Naive thymus-derived CD4-positive, alpha-beta T cell (primary cell): ENCODE measurements at regions of chr12 and their contacts with region 1.

Region 1: GRCh38 chr12:575948-576612 is 87.2 kb downstream of the NINJ2 start:
- DNase-seq: peak; percentile 63 to 97 (median 83)
- ATAC-seq: peak; percentile 99
- H3K4me3 ChIP-seq: no peak overlapping the region
- H3K4me3 Mint-ChIP-seq: peak overlapping the region; percentile 14 to 70 (median 56)
- H3K27ac ChIP-seq: no peak overlapping the region
- H3K27ac Mint-ChIP-seq: peak overlapping the region in 7 of 9 donors; percentile 44 to 89 (median 76)
- H3K4me1 ChIP-seq: peaks cover 11 to 16% of the 10 kb centered on the region in 2 donors
- H3K4me1 Mint-ChIP-seq: peaks cover 10 to 38% (median 19%) of the 10 kb centered on the region in 7 donors
- H3K27me3 ChIP-seq: no peaks in the 10 kb centered on the region
- H3K27me3 Mint-ChIP-seq: peaks cover 0 to 1% (median 0%) of the 10 kb centered on the region in 5 donors

Region 2: DNA sequence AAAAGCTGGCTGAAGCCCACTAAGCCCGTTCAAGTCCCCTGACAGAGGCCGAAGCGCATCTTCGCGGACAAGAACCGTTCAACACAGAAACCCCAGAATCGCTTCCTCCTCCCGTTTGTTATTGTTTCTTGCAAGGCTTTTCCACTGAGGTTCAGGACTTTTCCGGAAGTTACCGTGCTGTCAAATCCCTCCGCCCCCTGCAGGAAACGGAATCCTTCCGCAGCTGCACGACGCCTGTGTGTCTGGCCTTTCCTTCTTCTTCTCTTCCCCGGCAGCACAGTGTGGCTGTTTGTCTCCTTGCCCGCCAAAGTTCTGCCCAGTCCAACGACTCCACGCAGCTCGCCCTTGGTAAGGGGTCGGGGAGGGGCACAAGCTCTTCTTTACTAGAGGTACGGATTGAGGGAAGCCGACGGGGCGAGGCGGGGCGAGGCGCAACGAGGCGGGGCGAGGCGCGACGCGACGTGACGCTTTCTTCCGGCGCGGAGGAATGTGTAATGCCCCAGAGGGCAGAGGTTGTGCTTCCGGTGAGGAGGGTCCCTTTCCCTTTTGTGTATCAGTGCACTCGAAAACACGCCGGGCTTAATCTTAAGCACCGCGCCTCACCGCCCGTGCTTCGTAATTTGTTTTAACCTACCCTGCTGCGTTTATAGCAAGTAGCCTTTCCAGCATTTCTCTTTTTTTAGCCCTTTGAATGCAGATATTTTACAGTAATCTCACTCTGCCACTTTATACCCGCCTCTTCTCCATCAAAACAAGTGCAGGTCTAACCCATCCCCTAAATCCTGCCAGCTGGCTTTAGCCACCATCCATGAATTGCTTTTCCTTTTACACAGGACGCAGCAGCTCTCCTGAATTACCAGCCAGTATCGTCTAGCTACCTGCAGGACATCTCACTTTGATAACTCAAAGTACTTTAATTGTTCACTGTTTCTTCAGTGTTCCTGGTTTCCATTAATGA is 186.7 kb before region 1 on chr12 and contains the start of gene KDM5A:
- CTCF ChIA-PET with region 1: no interaction called
- POLR2A ChIA-PET with region 1: no interaction called
- intact Hi-C with region 1: no loop called
- DNase-seq: peak; percentile 82 to 97 (median 94)
- ATAC-seq: peak; percentile 97
- H3K4me3 ChIP-seq: peak within 1 kb of the TSS; percentile 96
- H3K4me3 Mint-ChIP-seq: peak within 1 kb of the TSS; percentile 91 to 100 (median 97)
- H3K27ac ChIP-seq: peak within 1 kb of the TSS; percentile 91
- H3K27ac Mint-ChIP-seq: peak within 1 kb of the TSS; percentile 95 to 100 (median 99)
- H3K4me1 ChIP-seq: peaks cover 31% of the 10 kb centered on the region in 2 donors
- H3K4me1 Mint-ChIP-seq: peaks cover 28 to 55% (median 39%) of the 10 kb centered on the region in 7 donors
- H3K27me3 ChIP-seq: no peaks in the 10 kb centered on the region
- H3K27me3 Mint-ChIP-seq: peaks cover 0 to 3% (median 0%) of the 10 kb centered on the region in 5 donors
- total RNA-seq, gene KDM5A: 110 to 138 (median 124) TPM

Region 3: DNA sequence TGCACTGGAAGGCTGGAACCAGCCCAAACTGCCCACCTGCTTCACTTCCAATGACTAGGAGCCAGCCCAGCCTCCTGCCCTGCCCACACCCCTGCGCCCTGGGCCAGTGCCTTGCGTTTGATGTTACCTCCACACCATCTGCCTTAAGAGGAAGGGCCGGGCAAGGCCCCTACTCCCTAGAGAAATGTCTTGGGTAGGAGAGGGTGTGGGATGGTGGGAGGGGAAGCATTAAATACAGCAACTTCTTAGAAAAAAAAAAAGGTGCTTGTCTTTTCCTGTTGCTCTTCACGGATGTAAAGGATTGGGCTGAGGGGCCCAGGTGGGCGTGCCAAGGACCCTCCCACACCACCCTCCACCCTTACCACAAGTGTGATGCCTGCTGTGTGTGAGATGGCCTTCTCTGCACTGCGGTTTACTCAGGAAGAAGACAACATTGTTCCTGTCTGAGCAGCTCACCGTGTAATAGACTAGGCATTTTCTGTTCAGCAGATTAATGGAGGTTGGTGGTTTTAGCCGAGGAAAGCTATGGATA is 12.8 kb before region 1 on chr12:
- CTCF ChIA-PET with region 1: interaction called, 10 read pairs
- POLR2A ChIA-PET with region 1: interaction called, 7 read pairs
- intact Hi-C with region 1: loop called in 1 of 2 experiments (anchors 1 kb)
- DNase-seq: peak in 8 of 9 donors; percentile 54 to 89 (median 85)
- ATAC-seq: peak; percentile 91
- H3K4me3 ChIP-seq: peak overlapping the region; percentile 49
- H3K4me3 Mint-ChIP-seq: peak overlapping the region; percentile 73 to 98 (median 85)
- H3K27ac ChIP-seq: peak overlapping the region; percentile 80
- H3K27ac Mint-ChIP-seq: peak overlapping the region; percentile 84 to 96 (median 94)
- H3K4me1 ChIP-seq: peaks cover 49 to 71% of the 10 kb centered on the region in 2 donors
- H3K4me1 Mint-ChIP-seq: peaks cover 60 to 98% (median 92%) of the 10 kb centered on the region in 7 donors
- H3K27me3 ChIP-seq: no peaks in the 10 kb centered on the region
- H3K27me3 Mint-ChIP-seq: no peaks in the 10 kb centered on the region

Region 4: DNA sequence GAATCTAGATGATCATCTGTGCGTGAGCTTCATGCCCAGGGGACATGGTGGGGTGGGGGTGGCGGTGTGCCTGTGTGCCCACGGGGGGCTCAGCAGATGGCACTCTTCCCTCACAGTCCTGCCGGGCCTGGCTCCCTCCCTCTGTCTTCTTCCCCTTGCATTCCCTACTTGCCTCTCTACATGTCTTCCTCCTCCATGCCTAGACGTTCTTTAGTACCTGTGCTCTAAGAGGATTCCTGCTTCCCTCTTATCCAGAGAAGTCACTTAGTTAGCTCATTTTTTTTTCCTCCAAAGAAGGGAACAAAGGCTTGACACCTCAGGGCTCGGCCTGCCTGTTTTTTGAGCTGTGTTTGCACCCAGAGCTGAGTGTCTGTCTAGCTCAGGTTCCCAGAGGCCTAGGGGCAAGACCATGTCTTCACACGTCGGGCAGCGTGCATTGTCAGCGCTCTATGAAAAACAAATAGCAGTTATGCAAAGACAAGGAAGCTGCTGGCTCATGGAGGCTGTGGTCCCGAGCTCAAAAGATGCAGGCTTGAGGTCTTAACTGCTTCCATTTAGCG is 38.4 kb after region 1 on chr12:
- CTCF ChIA-PET with region 1: interaction called, 7 read pairs
- POLR2A ChIA-PET with region 1: no interaction called
- intact Hi-C with region 1: loop called (anchors 2 to 5 kb)
- DNase-seq: peak in 4 of 9 donors; percentile 16 to 40 (median 32)
- ATAC-seq: peak; percentile 30
- H3K4me3 ChIP-seq: no peak overlapping the region
- H3K4me3 Mint-ChIP-seq: no peak overlapping the region
- H3K27ac ChIP-seq: no peak overlapping the region
- H3K27ac Mint-ChIP-seq: peak overlapping the region in 5 of 9 donors; percentile 30 to 70 (median 51)
- H3K4me1 ChIP-seq: peaks cover 6 to 19% of the 10 kb centered on the region in 2 donors
- H3K4me1 Mint-ChIP-seq: peaks cover 29 to 56% (median 43%) of the 10 kb centered on the region in 7 donors
- H3K27me3 ChIP-seq: no peaks in the 10 kb centered on the region
- H3K27me3 Mint-ChIP-seq: no peaks in the 10 kb centered on the region

Region 5: GRCh38 chr12:630656-631632 is 54.9 kb after region 1 on chr12:
- CTCF ChIA-PET with region 1: no interaction called
- POLR2A ChIA-PET with region 1: no interaction called
- intact Hi-C with region 1: loop called in 1 of 2 experiments (anchors 2 kb)
- DNase-seq: peak in 6 of 9 donors; percentile 54 to 88 (median 70)
- ATAC-seq: no peak
- H3K4me3 ChIP-seq: peak overlapping the region; percentile 53
- H3K4me3 Mint-ChIP-seq: peak overlapping the region in 8 of 10 donors; percentile 82 to 96 (median 91)
- H3K27ac ChIP-seq: peak overlapping the region; percentile 72
- H3K27ac Mint-ChIP-seq: peak overlapping the region in 7 of 9 donors; percentile 93 to 98 (median 95)
- H3K4me1 ChIP-seq: peaks cover 0 to 6% of the 10 kb centered on the region in 2 donors
- H3K4me1 Mint-ChIP-seq: peaks cover 7 to 47% (median 34%) of the 10 kb centered on the region in 7 donors
- H3K27me3 ChIP-seq: no peaks in the 10 kb centered on the region
- H3K27me3 Mint-ChIP-seq: no peaks in the 10 kb centered on the region

Region 6: GRCh38 chr12:2526371-2526770 is 1950.3 kb after region 1 on chr12:
- CTCF ChIA-PET with region 1: no interaction called
- POLR2A ChIA-PET with region 1: no interaction called
- intact Hi-C with region 1: no loop called
- DNase-seq: no peak
- ATAC-seq: no peak
- H3K4me3 ChIP-seq: no peak overlapping the region
- H3K4me3 Mint-ChIP-seq: no peak overlapping the region
- H3K27ac ChIP-seq: no peak overlapping the region
- H3K27ac Mint-ChIP-seq: no peak overlapping the region
- H3K4me1 ChIP-seq: no peaks in the 10 kb centered on the region
- H3K4me1 Mint-ChIP-seq: peaks cover 0 to 14% (median 0%) of the 10 kb centered on the region in 7 donors
- H3K27me3 ChIP-seq: no peaks in the 10 kb centered on the region
- H3K27me3 Mint-ChIP-seq: peaks cover 0 to 11% (median 4%) of the 10 kb centered on the region in 5 donors